ENCODE measurements at regions of chr3 and their contacts with region 1.

Region 1: DNA sequence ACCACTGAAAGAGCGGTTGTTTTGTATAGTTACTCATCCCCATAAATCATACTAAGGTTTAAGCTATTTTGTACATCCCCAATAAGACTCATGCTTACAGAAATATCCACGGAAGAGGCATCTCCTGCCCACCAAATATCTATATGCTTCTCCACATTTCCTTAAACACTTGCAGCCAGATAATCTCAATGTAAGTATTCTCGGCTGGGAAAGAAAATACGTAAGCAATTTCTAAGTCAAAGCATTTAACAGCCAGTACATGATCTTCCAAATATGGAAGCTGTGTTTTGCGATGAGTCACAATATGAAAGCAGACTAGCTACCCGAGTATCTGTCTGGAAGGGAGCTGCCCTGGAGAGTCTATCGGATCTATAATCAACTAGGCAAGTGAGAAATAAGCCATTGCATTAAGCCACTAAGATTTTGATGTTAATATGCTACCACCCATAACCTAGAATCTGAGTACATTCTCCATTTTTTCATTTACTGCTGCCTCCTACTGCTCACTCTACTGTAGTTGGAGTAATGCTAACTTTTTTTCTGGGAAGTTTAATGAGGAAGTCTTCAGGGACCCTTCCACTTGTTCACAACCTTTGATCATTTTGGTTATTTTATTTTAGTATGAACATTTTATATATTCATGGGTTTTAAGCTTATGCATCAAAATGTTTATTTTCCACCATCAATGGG is 26.9 kb upstream of the ZMAT3 start:
- DNase-seq: no peak
- CTCF ChIP-seq: no peak

Region 2: GRCh38 chr3:179083977-179084376 is 14.6 kb before region 1 on chr3:
- CTCF ChIA-PET with region 1: interaction called, 18 read pairs
- POLR2A ChIA-PET with region 1: interaction called, 6 read pairs
- DNase-seq: no peak
- CTCF ChIP-seq: no peak

Region 3: GRCh38 chr3:179227349-179227748 is 128.8 kb after region 1 on chr3:
- CTCF ChIA-PET with region 1: no interaction called
- POLR2A ChIA-PET with region 1: no interaction called
- DNase-seq: no peak
- CTCF ChIP-seq: no peak